ENCODE measurements at regions of chr1 and their contacts with region 1.

Region 1: GRCh38 chr1:26408604-26409003 is 2.0 kb upstream of the LIN28A start:
- DNase-seq: peak; percentile 90
- ATAC-seq: peak; percentile 11
- H3K4me3 Mint-ChIP-seq: peak overlapping the region; percentile 84
- H3K27ac Mint-ChIP-seq: peak overlapping the region; percentile 83
- H3K4me1 Mint-ChIP-seq: peaks cover 32% of the 10 kb centered on the region
- H3K27me3 Mint-ChIP-seq: no peaks in the 10 kb centered on the region; the same call in 1 of the 2 replicates
- CTCF ChIP-seq: no peak

Region 2: DNA sequence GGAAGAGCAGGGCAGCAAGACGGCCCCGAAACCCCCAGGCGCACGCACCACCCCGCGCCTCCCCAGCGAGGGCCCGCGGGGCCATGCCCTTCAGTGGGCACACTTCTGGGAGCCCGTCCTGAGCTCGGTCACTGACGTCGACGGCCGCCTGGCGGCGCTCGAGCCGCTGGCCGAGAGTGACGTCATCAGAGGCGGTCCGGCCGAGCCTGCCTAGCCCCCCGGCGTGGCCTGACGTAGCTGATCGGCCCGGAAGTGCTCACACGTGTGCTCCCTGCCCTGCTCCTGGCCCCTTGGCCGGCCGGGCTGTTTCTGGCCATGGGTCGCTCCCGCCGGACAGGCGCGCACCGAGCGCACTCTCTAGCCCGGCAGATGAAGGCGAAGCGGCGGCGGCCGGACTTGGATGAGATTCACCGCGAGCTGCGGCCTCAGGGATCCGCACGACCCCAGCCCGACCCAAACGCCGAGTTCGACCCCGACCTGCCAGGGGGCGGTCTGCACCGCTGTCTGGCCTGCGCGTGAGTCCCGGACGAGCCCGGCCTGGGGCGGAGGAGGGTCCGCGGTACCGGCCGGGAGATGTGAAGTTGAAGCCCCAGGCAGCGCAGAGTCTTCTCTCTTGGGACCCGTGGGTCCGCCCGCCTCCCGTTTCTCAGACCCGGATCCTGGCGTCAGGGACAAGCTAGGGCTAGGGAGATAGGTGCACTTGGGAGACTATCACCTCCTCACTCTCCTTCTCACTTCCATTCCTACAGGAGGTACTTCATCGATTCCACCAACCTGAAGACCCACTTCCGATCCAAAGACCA is 238.7 kb before region 1 on chr1 and contains the start of gene ZNF593:
- CTCF ChIA-PET with region 1: no interaction called
- POLR2A ChIA-PET with region 1: no interaction called
- DNase-seq: peak; percentile 92
- ATAC-seq: peak; percentile 76
- H3K4me3 Mint-ChIP-seq: peak within 1 kb of the TSS; percentile 85
- H3K27ac Mint-ChIP-seq: peak within 1 kb of the TSS; percentile 65; the same call in 1 of the 2 replicates
- H3K4me1 Mint-ChIP-seq: peaks cover 31% of the 10 kb centered on the region
- H3K27me3 Mint-ChIP-seq: peaks cover 14% of the 10 kb centered on the region
- CTCF ChIP-seq: peak; percentile 81
- total RNA-seq, gene ZNF593: 39.6 to 49.1 TPM (median 43.3 TPM) in 3 replicates

Region 3: DNA sequence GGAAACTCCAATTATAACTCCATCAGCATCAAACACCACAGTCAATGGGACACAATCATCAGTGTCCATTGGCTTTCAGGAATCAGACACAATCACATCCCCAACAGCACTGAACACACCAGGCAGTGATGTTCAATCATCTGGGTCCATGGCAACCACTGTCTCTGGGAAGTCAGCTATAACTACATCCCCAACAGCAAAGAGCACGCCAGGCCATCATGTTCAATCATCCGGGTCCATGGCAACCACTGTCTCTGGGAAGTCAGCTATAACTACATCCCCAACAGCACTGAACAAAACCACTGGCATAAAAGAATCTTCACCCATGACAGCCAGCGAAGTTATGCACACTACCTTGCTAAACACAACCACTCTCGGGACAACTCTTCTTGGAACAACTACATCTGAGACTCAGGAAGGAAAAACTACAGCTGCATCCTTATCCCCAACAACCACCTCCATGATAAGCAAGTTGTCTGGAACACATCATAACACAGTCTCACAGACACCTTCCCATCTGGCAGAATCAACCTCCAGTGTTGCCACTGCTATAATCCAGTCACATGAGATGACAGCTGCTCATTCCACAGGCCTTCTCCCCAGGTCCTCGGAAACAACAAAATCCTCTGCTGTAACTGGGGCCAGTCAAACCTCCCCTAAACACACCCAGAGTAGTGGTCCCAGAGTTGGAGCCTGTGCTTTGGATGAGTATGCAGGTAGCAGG is 198.3 kb before region 1 on chr1:
- CTCF ChIA-PET with region 1: no interaction called
- POLR2A ChIA-PET with region 1: no interaction called
- DNase-seq: no peak
- ATAC-seq: no peak
- H3K4me3 Mint-ChIP-seq: no peak overlapping the region
- H3K27ac Mint-ChIP-seq: no peak overlapping the region
- H3K4me1 Mint-ChIP-seq: no peaks in the 10 kb centered on the region
- H3K27me3 Mint-ChIP-seq: no peaks in the 10 kb centered on the region
- CTCF ChIP-seq: no peak

Region 4: GRCh38 chr1:26431979-26432695 is 23.5 kb after region 1 on chr1 and contains the start of gene DHDDS:
- CTCF ChIA-PET with region 1: interaction called, 7 read pairs
- POLR2A ChIA-PET with region 1: interaction called, 25 read pairs
- DNase-seq: peak; percentile 97
- ATAC-seq: peak; percentile 87
- H3K4me3 Mint-ChIP-seq: peak within 1 kb of the TSS; percentile 96
- H3K27ac Mint-ChIP-seq: peak within 1 kb of the TSS; percentile 97
- H3K4me1 Mint-ChIP-seq: peaks cover 44% of the 10 kb centered on the region
- H3K27me3 Mint-ChIP-seq: no peaks in the 10 kb centered on the region
- CTCF ChIP-seq: no peak
- total RNA-seq, gene DHDDS: 44.9 to 55.4 TPM (median 47.1 TPM) in 3 replicates

Measured in WTC11 (cell line).